CD4-positive, alpha-beta memory T cell (primary cell): ENCODE measurements at regions of chr9 and their contacts with region 1.

Region 1: GRCh38 chr9:98118640-98119601 is at the start of gene TRIM14:
- DNase-seq: peak; percentile 35 to 71 (median 45)
- H3K4me3 ChIP-seq: peak within 1 kb of the TSS; percentile 70 to 87
- H3K4me3 Mint-ChIP-seq: peak within 1 kb of the TSS; percentile 87 to 96 (median 92)
- H3K27ac ChIP-seq: peak within 1 kb of the TSS; percentile 92
- H3K27ac Mint-ChIP-seq: peak within 1 kb of the TSS; percentile 89 to 99 (median 95)
- H3K4me1 ChIP-seq: peaks cover 70% of the 10 kb centered on the region
- H3K4me1 Mint-ChIP-seq: peaks cover 37 to 65% (median 50%) of the 10 kb centered on the region in 4 donors
- H3K27me3 ChIP-seq: no peaks in the 10 kb centered on the region
- H3K27me3 Mint-ChIP-seq: no peaks in the 10 kb centered on the region
- total RNA-seq, gene TRIM14: 86.1 to 86.2 TPM

Region 2: GRCh38 chr9:97529363-97530076 is 589.4 kb before region 1 on chr9:
- CTCF ChIA-PET with region 1: no interaction called
- POLR2A ChIA-PET with region 1: no interaction called
- intact Hi-C with region 1: no loop called
- DNase-seq: no peak
- H3K4me3 ChIP-seq: no peak overlapping the region
- H3K4me3 Mint-ChIP-seq: no peak overlapping the region
- H3K27ac ChIP-seq: no peak overlapping the region
- H3K27ac Mint-ChIP-seq: no peak overlapping the region
- H3K4me1 ChIP-seq: no peaks in the 10 kb centered on the region
- H3K4me1 Mint-ChIP-seq: no peaks in the 10 kb centered on the region
- H3K27me3 ChIP-seq: no peaks in the 10 kb centered on the region
- H3K27me3 Mint-ChIP-seq: peaks cover 0 to 4% of the 10 kb centered on the region in 2 donors

Region 3: DNA sequence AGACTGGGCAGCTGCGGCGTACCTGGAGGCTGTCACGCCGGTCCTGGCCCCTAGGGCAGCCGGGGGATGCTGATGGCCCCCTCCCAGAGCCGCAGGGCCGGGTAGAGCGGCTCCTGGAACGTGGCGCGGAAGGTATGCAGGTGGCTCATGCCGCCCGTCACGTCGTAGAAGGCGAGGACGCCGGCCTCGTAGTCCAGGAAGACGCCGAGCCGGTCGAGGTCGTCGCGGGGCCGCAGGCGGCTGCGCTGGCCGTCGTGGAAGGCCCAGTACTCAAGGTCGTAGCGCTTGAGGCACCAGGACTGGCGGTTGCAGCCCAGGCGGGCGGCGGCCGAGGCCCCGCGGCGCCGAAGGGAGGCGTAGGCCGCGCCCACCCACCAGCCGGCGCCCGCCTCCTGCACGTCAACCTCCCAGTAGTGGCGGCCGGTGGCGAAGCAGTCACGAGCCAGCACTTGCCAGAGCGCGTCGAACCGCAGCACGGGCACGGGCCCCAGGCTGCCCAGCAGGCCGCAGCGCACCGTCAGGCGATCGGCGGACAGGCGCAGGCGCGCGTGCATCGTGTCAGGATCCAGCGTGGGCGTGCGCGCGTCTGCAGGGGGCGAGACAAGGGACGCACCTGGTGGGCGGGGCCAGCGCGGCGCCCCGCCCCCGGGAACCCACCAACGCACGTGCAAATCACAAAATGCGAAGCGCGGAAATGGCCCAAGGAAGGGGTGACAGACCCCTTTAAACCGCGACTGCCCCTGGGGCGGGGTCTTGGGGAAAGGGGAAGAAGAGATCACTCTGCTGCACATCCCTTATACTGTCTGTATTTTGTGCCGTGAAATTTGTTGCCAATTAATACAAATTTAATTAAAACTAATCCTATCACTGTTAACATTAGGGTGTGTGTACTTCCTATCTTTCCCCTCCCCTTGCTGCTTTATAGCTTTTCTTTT is 31.2 kb before region 1 on chr9:
- CTCF ChIA-PET with region 1: interaction called, 17 read pairs
- POLR2A ChIA-PET with region 1: interaction called, 8 read pairs
- intact Hi-C with region 1: no loop called
- DNase-seq: peak in 3 of 5 donors; percentile 35 to 51 (median 43)
- H3K4me3 ChIP-seq: no peak overlapping the region
- H3K4me3 Mint-ChIP-seq: peak overlapping the region in 3 of 8 donors; percentile 31 to 66 (median 39)
- H3K27ac ChIP-seq: no peak overlapping the region
- H3K27ac Mint-ChIP-seq: peak overlapping the region in 1 of 7 donors; percentile 53
- H3K4me1 ChIP-seq: peaks cover 2% of the 10 kb centered on the region
- H3K4me1 Mint-ChIP-seq: peaks cover 25 to 60% (median 40%) of the 10 kb centered on the region in 4 donors
- H3K27me3 ChIP-seq: no peaks in the 10 kb centered on the region
- H3K27me3 Mint-ChIP-seq: no peaks in the 10 kb centered on the region

Region 4: GRCh38 chr9:98108531-98109031 is 10.3 kb before region 1 on chr9:
- CTCF ChIA-PET with region 1: interaction called, 43 read pairs
- POLR2A ChIA-PET with region 1: interaction called, 412 read pairs
- intact Hi-C with region 1: loop called (anchors 1 kb)
- DNase-seq: peak; percentile 63 to 76 (median 67)
- H3K4me3 ChIP-seq: no peak overlapping the region
- H3K4me3 Mint-ChIP-seq: peak overlapping the region; percentile 17 to 84 (median 62)
- H3K27ac ChIP-seq: peak overlapping the region; percentile 63
- H3K27ac Mint-ChIP-seq: peak overlapping the region; percentile 86 to 98 (median 96)
- H3K4me1 ChIP-seq: peaks cover 88% of the 10 kb centered on the region
- H3K4me1 Mint-ChIP-seq: peaks cover 57 to 91% (median 76%) of the 10 kb centered on the region in 4 donors
- H3K27me3 ChIP-seq: no peaks in the 10 kb centered on the region
- H3K27me3 Mint-ChIP-seq: no peaks in the 10 kb centered on the region

Region 5: GRCh38 chr9:98207606-98208005 is 88.7 kb after region 1 on chr9:
- CTCF ChIA-PET with region 1: interaction called, 16 read pairs
- POLR2A ChIA-PET with region 1: no interaction called
- intact Hi-C with region 1: loop called (anchors 1 kb)
- DNase-seq: no peak
- H3K4me3 ChIP-seq: no peak overlapping the region
- H3K4me3 Mint-ChIP-seq: no peak overlapping the region
- H3K27ac ChIP-seq: no peak overlapping the region
- H3K27ac Mint-ChIP-seq: peak overlapping the region in 3 of 7 donors; percentile 24 to 49 (median 36)
- H3K4me1 ChIP-seq: peaks cover 8% of the 10 kb centered on the region
- H3K4me1 Mint-ChIP-seq: peaks cover 0 to 11% (median 6%) of the 10 kb centered on the region in 4 donors
- H3K27me3 ChIP-seq: no peaks in the 10 kb centered on the region
- H3K27me3 Mint-ChIP-seq: no peaks in the 10 kb centered on the region